Activated naive CD4-positive, alpha-beta T cell treated with anti-CD3 and anti-CD28 coated beads for 36 hours (primary cell): ENCODE measurements at regions of chr10 and their contacts with region 1.

Region 1: GRCh38 chr10:69087590-69088470 is at the start of gene SRGN:
- DNase-seq: peak; percentile 91
- H3K4me3 Mint-ChIP-seq: peak within 1 kb of the TSS; percentile 89
- H3K27ac Mint-ChIP-seq: peak within 1 kb of the TSS; percentile 99
- H3K4me1 Mint-ChIP-seq: peaks cover 59% of the 10 kb centered on the region
- H3K27me3 Mint-ChIP-seq: no peaks in the 10 kb centered on the region
- total RNA-seq, gene SRGN: 197 to 198 TPM

Region 2: DNA sequence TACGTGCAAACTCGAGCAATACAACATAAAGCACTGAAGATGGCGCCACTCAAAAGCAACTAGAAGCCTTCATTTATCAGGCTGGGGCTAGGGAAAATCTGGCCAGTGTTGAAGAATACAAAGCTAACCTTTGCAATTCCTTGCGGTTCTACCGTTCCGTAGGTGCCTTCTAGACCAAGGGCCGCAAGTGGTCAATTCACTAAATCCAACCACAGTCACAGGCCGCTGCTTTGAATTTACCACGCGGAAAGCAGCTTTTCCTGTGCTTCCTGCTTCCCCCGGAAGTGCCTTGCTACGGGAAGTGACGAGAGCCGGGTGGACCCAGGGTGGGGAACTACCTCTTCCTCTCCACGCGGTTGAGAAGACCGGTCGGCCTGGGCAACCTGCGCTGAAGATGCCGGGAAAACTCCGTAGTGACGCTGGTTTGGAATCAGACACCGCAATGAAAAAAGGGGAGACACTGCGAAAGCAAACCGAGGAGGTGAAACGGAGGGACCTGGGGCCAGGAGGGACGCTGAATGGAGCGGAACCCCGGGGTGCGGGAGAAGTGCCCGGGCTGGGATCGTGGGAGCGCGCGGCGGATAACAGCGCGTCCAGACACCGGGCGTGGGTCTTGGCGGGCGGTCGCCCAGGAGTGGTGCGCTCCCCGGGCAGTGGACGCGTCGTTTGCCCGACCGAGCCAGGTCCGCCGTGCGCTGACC is 131.8 kb before region 1 on chr10 and contains the start of gene DDX21:
- CTCF ChIA-PET with region 1: interaction called, 8 read pairs
- intact Hi-C with region 1: loop called (anchors 1 kb)
- DNase-seq: peak; percentile 94
- H3K4me3 Mint-ChIP-seq: peak within 1 kb of the TSS; percentile 100
- H3K27ac Mint-ChIP-seq: peak within 1 kb of the TSS; percentile 100
- H3K4me1 Mint-ChIP-seq: peaks cover 44% of the 10 kb centered on the region
- H3K27me3 Mint-ChIP-seq: no peaks in the 10 kb centered on the region
- total RNA-seq, gene DDX21: 155 to 164 TPM

Region 3: DNA sequence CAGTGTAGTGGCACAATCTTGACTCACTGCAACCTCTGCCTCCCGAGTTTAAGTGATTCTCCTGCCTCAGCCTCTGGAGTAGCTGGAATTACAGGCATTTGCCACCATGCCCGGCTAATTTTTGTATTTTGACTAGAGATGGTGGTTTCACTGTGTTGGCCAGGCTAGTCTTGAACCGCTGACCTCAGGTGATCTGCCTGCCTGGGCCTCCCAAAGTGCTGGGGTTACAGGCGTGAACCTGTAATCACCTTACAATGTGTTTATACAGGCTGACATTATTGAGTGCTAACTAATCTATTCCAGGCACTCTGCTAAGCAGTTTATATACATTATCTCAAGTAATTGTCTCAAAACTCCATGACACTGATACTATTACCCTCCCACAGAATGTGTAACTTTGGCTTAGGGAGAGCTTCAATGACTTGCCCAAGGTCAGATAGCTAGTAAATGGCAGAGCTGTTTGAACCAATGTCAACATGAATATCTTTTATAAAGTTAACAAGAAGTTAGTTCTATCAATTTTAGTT is 62.4 kb before region 1 on chr10:
- CTCF ChIA-PET with region 1: interaction called, 4 read pairs
- intact Hi-C with region 1: loop called (anchors 1 kb)
- DNase-seq: no peak
- H3K4me3 Mint-ChIP-seq: no peak overlapping the region
- H3K27ac Mint-ChIP-seq: no peak overlapping the region
- H3K4me1 Mint-ChIP-seq: peaks cover 9% of the 10 kb centered on the region
- H3K27me3 Mint-ChIP-seq: no peaks in the 10 kb centered on the region

Region 4: DNA sequence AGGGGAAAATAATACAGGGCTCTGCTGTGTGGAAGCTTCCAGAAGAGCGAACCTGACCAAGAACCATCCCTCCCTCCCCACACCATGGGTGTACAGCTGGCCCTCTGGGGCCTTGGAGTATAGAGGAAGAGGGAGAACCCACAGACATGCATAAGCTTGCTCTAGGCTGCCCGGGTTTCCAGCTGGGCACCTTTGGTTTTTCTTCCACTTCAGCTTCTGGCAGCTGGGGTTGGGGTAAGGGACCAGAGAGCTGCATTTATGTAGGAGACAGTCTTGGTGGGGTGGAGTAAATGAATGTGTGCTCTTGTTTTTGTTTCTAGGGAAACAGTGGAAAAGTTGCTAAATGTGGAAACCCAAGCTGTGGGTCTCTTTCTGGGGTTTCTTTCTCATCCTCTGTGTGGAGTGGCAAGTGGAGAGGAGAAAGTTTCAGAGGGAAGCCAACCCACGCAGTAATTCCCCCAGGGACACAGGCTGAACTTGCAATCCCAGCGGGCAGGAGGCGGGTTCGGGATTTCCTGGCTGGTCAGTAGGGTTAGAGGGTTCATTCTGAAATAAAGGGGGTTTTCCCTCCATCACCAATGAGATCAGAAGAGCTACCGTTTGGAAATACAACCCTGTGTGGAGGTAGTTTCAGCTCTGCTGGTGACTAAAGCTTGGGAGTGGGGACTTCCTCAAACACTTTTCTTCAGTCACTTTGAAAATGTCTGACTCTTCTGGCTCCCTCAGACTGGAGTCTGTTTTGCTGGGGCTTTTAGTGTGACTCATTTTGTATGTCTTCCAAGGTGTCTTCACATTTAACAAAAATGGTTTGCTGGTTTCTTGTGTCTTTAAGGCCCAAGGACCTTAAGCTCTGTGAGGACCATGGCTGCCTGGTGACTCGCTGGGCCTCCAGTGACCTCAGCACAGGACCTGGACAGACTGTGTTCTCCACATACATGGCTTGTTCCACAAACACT is 22.1 kb before region 1 on chr10:
- CTCF ChIA-PET with region 1: interaction called, 23 read pairs
- intact Hi-C with region 1: loop called (anchors 1 kb)
- DNase-seq: peak; percentile 67
- H3K4me3 Mint-ChIP-seq: peak overlapping the region; percentile 19
- H3K27ac Mint-ChIP-seq: peak overlapping the region; percentile 93
- H3K4me1 Mint-ChIP-seq: peaks cover 39% of the 10 kb centered on the region
- H3K27me3 Mint-ChIP-seq: no peaks in the 10 kb centered on the region

Region 5: DNA sequence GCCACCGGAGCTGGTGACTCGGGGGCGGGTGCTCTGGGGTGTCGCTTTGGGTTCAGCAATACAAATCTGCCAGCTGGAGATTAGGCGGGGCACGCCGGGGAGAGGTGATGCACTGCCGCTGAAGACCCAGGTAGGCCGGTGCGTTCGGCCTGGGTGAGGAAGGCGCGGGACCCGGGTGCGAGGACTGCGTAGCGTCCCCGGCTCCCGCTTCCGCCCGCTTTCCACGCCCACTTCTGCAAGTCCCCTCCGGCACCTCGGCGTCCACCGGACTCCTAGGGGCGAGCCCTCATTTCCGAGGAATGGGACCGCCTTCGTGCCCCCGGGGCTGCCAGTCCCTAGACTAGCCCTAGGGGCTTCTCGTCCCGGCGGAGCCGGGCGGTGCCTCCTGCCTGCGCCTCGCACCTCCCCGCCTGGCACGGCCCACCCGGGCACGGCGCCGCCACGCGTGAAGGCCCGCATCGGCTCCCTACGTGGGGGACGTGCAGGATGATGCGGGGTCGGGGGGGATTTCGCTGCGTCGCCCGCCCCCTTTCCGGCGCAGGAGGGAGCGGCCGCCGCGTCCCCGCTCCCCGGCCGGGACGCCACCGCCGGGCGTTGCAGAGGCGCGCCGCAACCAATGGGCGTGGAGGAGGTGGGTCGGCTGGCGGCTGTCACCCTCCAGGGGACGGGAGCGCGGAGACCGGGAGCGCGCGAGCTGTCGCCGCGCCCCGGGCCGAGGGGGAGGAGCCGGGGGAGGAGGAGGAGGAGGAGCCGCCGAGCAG is 230.5 kb after region 1 on chr10:
- CTCF ChIA-PET with region 1: no interaction called
- intact Hi-C with region 1: loop called (anchors 2 kb)
- DNase-seq: peak; percentile 93
- H3K4me3 Mint-ChIP-seq: peak overlapping the region; percentile 98
- H3K27ac Mint-ChIP-seq: peak overlapping the region; percentile 93
- H3K4me1 Mint-ChIP-seq: peaks cover 46% of the 10 kb centered on the region
- H3K27me3 Mint-ChIP-seq: no peaks in the 10 kb centered on the region